HepG2 (cell line): ENCODE measurements at regions of chr21 and their contacts with region 1.

Region 1: GRCh38 chr21:15210235-15210739 is 145.5 kb upstream of the NRIP1 start:
- DNase-seq: peak; percentile 92
- ATAC-seq: peak; percentile 95
- H3K4me3 ChIP-seq: peak overlapping the region in 2 of 3 experiments; percentile 35 to 46; a peak in 3 of 6 replicates
- H3K27ac ChIP-seq: peak overlapping the region; percentile 91
- H3K4me1 ChIP-seq: peaks cover 78% of the 10 kb centered on the region
- H3K27me3 ChIP-seq: no peaks in the 10 kb centered on the region
- CTCF ChIP-seq: peak; percentile 78
- EP300 ChIP-seq: peak; percentile 54 to 94; a peak in 3 of 4 replicates
- POLR2A ChIP-seq: peak; percentile 34 to 38; a peak in 2 of 4 replicates
- RAD21 ChIP-seq: peak; percentile 56; the same call in 1 of the 2 replicates

Region 2: DNA sequence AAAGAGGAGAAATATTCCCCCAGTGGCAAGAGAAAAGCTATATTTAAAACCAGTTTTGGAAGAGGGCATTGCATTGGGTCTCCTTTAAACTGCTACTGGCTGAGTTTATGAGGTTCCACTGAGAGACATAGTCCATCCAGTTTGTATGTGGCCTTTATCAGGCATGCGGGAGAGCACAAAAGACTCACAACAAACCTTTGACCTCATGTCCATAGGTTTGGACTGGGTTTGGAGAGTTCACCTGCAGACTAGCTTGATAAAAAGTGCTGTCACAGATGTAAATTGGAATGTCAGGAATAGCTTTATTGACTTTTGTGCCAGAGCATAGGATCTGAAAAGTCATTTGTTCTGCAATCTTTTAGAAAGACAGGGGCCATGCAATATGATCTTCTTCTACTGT is 14.5 kb before region 1 on chr21:
- CTCF ChIA-PET with region 1: no interaction called
- POLR2A ChIA-PET with region 1: interaction called, 4 read pairs
- in situ Hi-C with region 1: no loop called
- intact Hi-C with region 1: loop called (anchors 1 kb)
- DNase-seq: peak; percentile 92
- ATAC-seq: peak; percentile 93
- H3K4me3 ChIP-seq: no peak overlapping the region; a peak in 1 of 6 replicates
- H3K27ac ChIP-seq: peak overlapping the region; percentile 70
- H3K4me1 ChIP-seq: peaks cover 75% of the 10 kb centered on the region
- H3K27me3 ChIP-seq: no peaks in the 10 kb centered on the region
- CTCF ChIP-seq: no peak
- EP300 ChIP-seq: peak in 1 of 2 experiments; percentile 83; a peak in 2 of 4 replicates
- POLR2A ChIP-seq: no peak
- RAD21 ChIP-seq: no peak

Region 3: GRCh38 chr21:15483138-15483780 is 273.0 kb after region 1 on chr21:
- CTCF ChIA-PET with region 1: interaction called, 3 read pairs
- POLR2A ChIA-PET with region 1: no interaction called
- in situ Hi-C with region 1: no loop called
- intact Hi-C with region 1: loop called (anchors 2 kb)
- DNase-seq: peak; percentile 82
- ATAC-seq: peak; percentile 100
- H3K4me3 ChIP-seq: no peak overlapping the region
- H3K27ac ChIP-seq: no peak overlapping the region
- H3K4me1 ChIP-seq: peaks cover 25% of the 10 kb centered on the region
- H3K27me3 ChIP-seq: no peaks in the 10 kb centered on the region
- CTCF ChIP-seq: peak; percentile 97
- EP300 ChIP-seq: no peak
- POLR2A ChIP-seq: no peak
- RAD21 ChIP-seq: peak; percentile 96